RWPE1 (cell line): ENCODE measurements at regions of chr17 and their contacts with region 1.

Region 1: DNA sequence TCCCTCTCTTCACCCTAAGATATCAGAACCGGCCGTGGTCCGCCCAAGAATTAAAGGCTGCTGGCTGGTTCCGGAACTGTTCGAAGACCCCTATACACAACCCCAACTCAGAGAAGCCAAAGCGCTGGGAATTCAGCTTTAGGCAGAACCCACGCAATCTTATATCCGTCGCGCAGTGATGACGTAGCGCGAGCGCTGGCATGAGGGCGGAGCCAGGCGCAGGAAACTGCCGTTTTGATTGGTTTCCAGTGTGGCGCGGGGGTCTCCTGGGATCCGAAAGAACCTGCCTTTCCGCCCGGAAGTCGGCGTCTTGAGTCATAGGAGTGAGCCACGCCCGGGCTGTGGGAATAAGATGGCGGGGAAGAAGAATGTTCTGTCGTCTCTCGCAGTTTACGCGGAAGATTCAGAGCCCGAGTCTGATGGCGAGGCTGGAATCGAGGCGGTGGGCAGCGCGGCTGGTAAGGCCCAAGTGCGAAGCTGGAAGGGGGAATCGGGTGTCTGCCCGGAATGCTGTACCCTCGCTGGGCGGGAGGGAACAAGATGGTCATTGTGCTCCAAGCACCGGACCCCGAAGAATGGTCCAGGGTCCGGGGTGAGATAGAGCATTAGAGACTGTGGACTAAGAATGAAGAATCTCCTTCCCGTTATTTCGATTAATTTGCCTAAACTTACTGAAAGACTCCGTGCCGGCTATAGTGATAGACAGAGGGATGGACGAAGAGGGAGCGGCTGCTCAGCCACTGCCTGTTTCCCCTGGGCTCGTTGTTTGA is at the starts of genes RECQL5 and SAP30BP:
- DNase-seq: peak; percentile 96
- H3K27ac ChIP-seq: peak within 1 kb of the TSS; percentile 75
- CTCF ChIP-seq: no peak

Region 2: DNA sequence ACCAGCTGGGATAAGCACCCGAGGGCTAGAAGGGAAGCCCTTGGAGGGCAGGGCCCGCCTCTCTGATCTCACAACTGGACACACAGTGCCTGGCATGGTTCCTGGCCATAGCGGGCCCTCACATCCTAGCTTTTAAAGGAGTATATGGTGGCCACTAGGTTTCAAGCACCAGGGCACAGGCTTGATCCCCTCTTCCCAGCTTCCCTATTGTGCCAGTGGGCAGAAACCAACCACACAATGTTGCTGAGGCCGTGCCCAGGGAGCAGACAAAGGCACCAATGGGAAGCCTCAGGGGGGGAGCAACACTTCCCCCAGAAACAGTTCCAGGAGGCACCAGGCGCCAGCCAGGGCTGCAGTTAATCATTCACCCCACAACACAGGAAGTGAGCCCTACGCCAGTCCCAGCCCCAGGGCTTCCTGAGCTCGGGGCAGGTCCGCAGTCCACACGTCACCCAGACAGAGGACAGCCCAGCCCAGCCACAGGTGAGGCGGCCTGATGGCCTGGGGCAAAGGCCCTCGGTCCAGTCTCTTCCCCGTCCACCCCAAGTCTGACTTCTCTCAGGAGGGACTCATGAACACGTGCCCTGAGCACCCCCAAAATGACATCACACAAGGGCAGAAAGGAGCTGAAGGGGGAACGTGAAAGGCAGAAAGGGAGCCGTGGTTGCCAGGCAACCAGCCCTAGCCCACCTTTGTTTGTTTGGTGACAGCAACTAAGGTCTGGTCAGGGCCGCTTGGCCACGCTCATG is 21.1 kb before region 1 on chr17:
- CTCF ChIA-PET with region 1: interaction called, 10 read pairs
- POLR2A ChIA-PET with region 1: no interaction called
- DNase-seq: peak; percentile 77
- H3K27ac ChIP-seq: peak overlapping the region; percentile 68
- CTCF ChIP-seq: no peak

Region 3: GRCh38 chr17:75764711-75765421 is 97.7 kb after region 1 on chr17 and contains the start of gene GALK1:
- CTCF ChIA-PET with region 1: no interaction called
- POLR2A ChIA-PET with region 1: no interaction called
- DNase-seq: peak; percentile 73
- H3K27ac ChIP-seq: peak within 1 kb of the TSS; percentile 98
- CTCF ChIP-seq: peak; percentile 71